HCT116 (cell line): ENCODE measurements at regions of chr5 and their contacts with region 1.

Region 1: DNA sequence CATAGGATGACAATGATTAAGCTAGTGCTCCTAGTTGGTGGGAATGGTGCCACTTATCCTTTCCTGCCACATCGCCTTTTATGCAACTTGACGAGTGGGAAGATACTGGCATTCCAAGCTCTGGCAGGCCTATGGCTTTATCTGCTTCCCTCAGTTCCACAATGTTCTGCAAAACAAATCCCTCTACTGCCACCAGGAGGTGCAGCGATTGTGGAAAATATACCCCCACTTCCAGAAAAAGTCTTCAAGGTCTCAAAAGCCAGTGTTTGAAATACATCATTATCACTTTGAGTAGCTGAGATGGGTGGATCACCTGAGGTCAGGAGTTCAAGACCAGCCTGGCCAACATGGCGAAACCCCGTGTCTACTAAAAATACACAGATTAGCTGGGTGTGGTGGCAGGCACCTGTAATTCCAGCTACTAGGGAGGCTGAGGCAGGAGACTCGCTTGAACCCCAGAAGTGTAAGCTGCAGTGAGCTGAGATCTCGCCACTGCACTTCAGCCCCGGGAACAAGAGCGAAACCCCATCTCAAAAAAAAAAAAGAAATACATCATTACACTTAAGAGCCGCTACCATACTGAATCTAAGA is 3.4 kb downstream of the CLINT1 start:
- DNase-seq: peak; percentile 51
- ATAC-seq: peak; percentile 42
- H3K4me3 ChIP-seq: no peak overlapping the region
- H3K27ac ChIP-seq: no peak overlapping the region
- H3K4me1 ChIP-seq: peaks cover 3 to 14% of the 10 kb centered on the region in 2 experiments; a peak in 3 of 4 replicates
- H3K27me3 ChIP-seq: no peaks in the 10 kb centered on the region
- CTCF ChIP-seq: peak; percentile 62 to 70 (median 63); a peak in 5 of 6 replicates
- POLR2A ChIP-seq: no peak
- RAD21 ChIP-seq: peak; percentile 63

Region 2: GRCh38 chr5:157917899-157918809 is 62.7 kb after region 1 on chr5:
- CTCF ChIA-PET with region 1: interaction called, 4 read pairs
- POLR2A ChIA-PET with region 1: interaction called, 3 read pairs
- RAD21 ChIA-PET with region 1: interaction called in 1 of 2 experiments, 3 read pairs
- intact Hi-C with region 1: loop called (anchors 1 kb)
- DNase-seq: peak; percentile 66
- ATAC-seq: peak; percentile 100
- H3K4me3 ChIP-seq: no peak overlapping the region
- H3K27ac ChIP-seq: no peak overlapping the region
- H3K4me1 ChIP-seq: 0 out of 4 replicates have a peak, but pooled peaks cover 0 to 3% of the 10 kb centered on the region in 2 experiments
- H3K27me3 ChIP-seq: no peaks in the 10 kb centered on the region
- CTCF ChIP-seq: peak; percentile 70 to 81 (median 73)
- POLR2A ChIP-seq: no peak
- RAD21 ChIP-seq: peak; percentile 71

Region 3: DNA sequence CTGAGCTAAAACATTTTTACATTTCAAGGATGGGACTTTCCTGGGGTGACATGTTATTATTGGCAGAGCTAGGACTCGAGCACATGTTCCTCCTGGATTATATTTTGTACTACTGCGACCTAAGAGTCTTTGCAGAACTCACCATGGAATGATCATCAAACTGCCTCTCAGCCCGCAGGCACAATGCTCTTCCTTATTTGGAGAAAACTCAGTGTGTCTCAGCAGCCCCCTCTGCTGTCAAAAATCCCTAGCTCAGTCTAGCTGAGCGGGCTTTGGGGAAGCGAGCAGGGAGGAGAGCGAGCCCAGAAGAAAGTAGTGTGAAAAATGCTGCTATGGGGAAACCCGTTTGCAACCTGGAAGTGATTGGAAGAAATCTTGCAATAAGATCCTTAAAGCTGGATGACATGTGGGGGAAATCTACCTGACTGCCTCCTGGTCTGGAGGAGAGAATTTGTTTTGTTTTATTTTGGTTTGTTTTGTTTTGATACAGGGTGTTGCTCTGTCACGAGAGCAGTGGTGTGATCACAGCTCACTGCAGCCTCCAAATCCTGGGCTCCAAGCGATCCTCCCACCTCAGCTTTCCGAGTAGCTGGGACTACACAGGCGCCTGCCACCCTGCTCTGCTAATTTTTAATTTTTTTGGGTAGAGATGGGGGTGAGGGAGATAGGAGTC is 93.4 kb after region 1 on chr5:
- CTCF ChIA-PET with region 1: interaction called, 11 read pairs
- POLR2A ChIA-PET with region 1: no interaction called
- RAD21 ChIA-PET with region 1: no interaction called
- intact Hi-C with region 1: no loop called
- DNase-seq: peak; percentile 83
- ATAC-seq: peak; percentile 100
- H3K4me3 ChIP-seq: peak overlapping the region in 1 of 2 experiments; percentile 27; a peak in 1 of 4 replicates
- H3K27ac ChIP-seq: no peak overlapping the region
- H3K4me1 ChIP-seq: peaks cover 0 to 9% of the 10 kb centered on the region in 2 experiments; a peak in 1 of 4 replicates
- H3K27me3 ChIP-seq: no peaks in the 10 kb centered on the region
- CTCF ChIP-seq: peak; percentile 81 to 88 (median 88)
- POLR2A ChIP-seq: no peak
- RAD21 ChIP-seq: peak; percentile 67

Region 4: GRCh38 chr5:157994906-157995519 is 139.5 kb after region 1 on chr5:
- CTCF ChIA-PET with region 1: no interaction called
- POLR2A ChIA-PET with region 1: no interaction called
- RAD21 ChIA-PET with region 1: no interaction called
- intact Hi-C with region 1: loop called (anchors 1 kb)
- DNase-seq: peak; percentile 46
- ATAC-seq: peak; percentile 99
- H3K4me3 ChIP-seq: no peak overlapping the region
- H3K27ac ChIP-seq: no peak overlapping the region
- H3K4me1 ChIP-seq: no peaks in the 10 kb centered on the region
- H3K27me3 ChIP-seq: no peaks in the 10 kb centered on the region
- CTCF ChIP-seq: peak; percentile 70 to 88 (median 73); a peak in 5 of 6 replicates
- POLR2A ChIP-seq: no peak
- RAD21 ChIP-seq: peak; percentile 79

Region 5: DNA sequence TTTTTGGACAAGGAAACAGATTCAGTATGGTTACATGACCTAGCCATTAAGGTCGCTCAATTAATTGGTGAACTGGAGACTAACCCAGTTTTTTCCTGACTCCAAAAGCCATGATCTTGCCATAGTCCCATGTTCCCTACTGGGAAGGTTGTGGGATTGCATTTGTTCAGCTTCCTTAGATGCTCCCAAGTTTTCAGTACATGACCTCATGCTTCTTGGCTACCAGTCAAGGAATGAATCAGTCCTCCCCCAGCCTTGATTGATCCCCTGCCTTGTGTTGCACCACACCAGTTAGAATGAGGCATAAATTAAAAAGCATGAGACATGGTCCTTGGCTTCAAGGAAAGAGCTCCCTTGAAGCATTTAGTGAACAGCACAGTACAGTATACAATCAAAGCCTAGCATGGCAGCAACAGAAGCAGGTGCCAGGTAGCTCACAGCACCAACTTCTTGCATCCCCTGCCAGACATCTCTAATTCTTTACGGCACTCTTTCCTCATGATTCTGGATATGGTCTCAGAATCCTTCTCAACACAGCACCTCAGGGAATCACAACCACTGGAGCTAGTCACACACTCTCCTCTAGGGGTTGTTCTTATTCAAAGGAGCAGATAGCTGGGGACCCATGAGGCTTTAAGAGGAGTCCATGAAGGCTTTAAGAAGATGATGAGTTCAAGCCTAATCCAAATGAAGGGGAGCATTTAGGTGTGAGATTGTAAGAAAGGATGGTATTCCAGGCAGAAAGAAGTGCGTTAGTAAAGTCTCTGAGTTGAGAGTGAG is 298.9 kb after region 1 on chr5:
- CTCF ChIA-PET with region 1: no interaction called
- POLR2A ChIA-PET with region 1: no interaction called
- RAD21 ChIA-PET with region 1: no interaction called
- intact Hi-C with region 1: no loop called
- DNase-seq: no peak
- ATAC-seq: no peak
- H3K4me3 ChIP-seq: no peak overlapping the region
- H3K27ac ChIP-seq: no peak overlapping the region
- H3K4me1 ChIP-seq: no peaks in the 10 kb centered on the region
- H3K27me3 ChIP-seq: peaks cover 30% of the 10 kb centered on the region
- CTCF ChIP-seq: 0 out of 6 replicates have a peak, but pooled peaks of 1 of the 3 experiments have one; percentile 4
- POLR2A ChIP-seq: no peak
- RAD21 ChIP-seq: no peak

Region 6: DNA sequence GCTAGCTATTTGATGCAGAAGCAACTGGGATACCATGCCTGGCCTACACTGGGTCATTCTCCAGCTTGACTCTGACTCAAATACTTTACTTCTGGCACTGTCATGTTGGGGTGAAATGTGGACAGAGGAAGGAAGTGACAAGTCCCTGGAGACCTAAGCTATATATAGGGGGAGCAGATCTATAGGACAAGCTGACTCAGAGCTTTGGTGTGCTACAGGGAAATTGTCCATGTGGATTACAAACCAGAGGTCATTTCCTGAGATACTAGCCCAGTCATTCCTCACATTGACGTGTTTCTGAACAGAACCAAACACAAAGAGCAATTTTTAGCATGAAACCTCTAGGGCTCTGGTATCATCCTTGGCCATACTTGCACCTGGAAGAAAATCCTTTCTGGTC is 535.1 kb after region 1 on chr5:
- CTCF ChIA-PET with region 1: no interaction called
- POLR2A ChIA-PET with region 1: no interaction called
- RAD21 ChIA-PET with region 1: no interaction called
- intact Hi-C with region 1: no loop called
- DNase-seq: no peak
- ATAC-seq: no peak
- H3K4me3 ChIP-seq: no peak overlapping the region
- H3K27ac ChIP-seq: no peak overlapping the region
- H3K4me1 ChIP-seq: no peaks in the 10 kb centered on the region; a peak in 1 of 4 replicates
- H3K27me3 ChIP-seq: peaks cover 5% of the 10 kb centered on the region; the same call in 1 of the 2 replicates
- CTCF ChIP-seq: no peak
- POLR2A ChIP-seq: no peak
- RAD21 ChIP-seq: no peak